ENCODE measurements at regions of chr14 and their contacts with region 1.

Region 1: GRCh38 chr14:23301288-23301968 is 1.2 kb downstream of the PPP1R3E start:
- DNase-seq: peak; percentile 99
- H3K4me3 Mint-ChIP-seq: peak overlapping the region; percentile 89
- H3K27ac Mint-ChIP-seq: peak overlapping the region; percentile 96
- H3K4me1 Mint-ChIP-seq: peaks cover 24% of the 10 kb centered on the region
- H3K27me3 Mint-ChIP-seq: peaks cover 2% of the 10 kb centered on the region

Region 2: DNA sequence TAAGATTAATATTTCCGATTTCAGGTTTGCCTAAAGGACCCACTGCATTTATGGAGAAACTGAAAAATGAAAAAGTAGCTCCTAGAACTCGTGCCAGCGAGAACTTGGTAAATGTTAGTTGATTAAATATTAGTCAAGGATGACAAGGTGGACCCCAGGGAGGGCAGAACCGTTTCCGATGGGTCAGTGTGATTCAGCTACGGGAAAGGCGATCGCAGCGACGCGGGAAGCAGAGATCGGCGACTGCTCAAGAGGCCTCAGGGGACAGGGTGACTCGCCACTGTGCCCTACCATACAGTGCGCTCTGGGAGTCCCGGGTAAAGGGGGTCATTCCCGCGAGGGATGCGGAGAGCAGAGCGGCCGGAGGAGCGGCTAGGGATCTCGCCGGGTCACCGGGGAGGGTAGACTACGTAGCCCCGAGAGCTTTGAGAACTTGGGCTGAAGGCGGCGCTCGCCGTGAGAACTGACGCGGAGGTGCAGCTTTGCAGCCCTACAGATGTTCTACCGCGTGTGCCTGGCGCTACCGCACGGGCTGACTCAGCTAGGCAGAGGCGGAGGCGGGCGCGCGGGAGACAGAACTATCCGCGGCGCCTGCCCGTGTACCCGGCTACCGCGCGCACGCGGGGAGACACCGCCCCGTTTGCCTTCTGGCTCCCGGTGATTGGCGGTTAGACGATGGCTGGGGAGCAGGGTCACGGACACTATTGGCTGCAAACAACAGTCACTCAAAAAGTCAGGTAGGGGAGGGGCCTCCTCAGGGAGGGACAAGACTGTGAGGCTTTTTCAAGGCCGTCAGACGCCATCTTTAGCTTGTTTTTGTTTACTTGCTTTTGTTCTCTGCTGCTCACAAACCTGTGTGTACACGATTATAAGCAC is 294.6 kb before region 1 on chr14:
- intact Hi-C with region 1: loop called (anchors 10 kb)
- DNase-seq: peak; percentile 98
- H3K4me3 Mint-ChIP-seq: peak overlapping the region; percentile 92
- H3K27ac Mint-ChIP-seq: peak overlapping the region; percentile 98
- H3K4me1 Mint-ChIP-seq: peaks cover 38% of the 10 kb centered on the region
- H3K27me3 Mint-ChIP-seq: no peaks in the 10 kb centered on the region

Region 3: DNA sequence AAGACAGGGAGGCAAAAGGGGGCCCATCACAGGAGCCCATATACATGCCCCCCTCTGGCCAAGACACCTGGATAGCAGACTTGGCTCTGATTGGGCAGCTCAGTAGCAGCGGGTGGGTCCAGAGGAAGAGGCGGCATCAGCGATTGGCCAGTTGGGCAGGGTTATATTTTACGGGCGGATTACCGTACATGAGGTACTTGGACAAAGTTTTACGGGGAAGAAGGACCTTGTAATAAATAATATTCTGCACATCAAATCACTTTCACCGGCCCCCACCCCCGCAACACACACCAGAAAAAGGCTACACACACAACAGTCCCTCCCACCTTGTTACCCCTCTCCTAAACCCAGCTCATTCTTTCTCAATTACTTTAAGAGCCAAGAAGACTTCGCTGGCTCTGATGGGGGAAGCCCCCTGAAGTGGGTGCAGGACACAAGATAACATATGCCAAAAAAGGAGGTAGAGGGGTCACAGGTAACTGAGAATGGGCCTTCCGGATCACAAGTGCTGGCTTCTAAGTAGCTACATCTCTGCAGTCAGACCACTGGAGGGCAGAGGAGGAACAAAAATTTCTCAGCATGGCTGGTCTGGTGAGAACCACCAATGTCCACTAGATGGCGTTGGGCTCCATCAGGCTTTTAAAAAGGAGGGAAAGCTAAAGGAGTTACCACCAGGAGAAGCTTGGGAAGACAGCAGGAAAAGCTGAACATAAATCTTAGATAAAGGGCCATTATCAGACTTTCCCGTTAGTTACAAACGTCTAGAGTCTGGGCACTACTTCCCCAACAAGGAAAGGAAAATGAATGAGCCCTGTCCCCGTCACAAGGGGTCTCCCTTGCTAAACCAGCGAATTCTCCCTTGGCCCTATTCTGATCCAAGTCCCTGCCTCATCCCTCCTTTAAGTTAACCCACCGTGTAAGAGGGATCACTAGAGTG is 232.7 kb before region 1 on chr14:
- intact Hi-C with region 1: no loop called
- DNase-seq: peak; percentile 70
- H3K4me3 Mint-ChIP-seq: peak overlapping the region; percentile 54
- H3K27ac Mint-ChIP-seq: peak overlapping the region; percentile 49
- H3K4me1 Mint-ChIP-seq: peaks cover 26% of the 10 kb centered on the region
- H3K27me3 Mint-ChIP-seq: no peaks in the 10 kb centered on the region

Region 4: GRCh38 chr14:23095196-23096108 is 206.0 kb before region 1 on chr14 and contains the start of gene C14orf119:
- intact Hi-C with region 1: loop called (anchors 2 kb)
- DNase-seq: peak; percentile 99
- H3K4me3 Mint-ChIP-seq: no peak within 1 kb of the TSS
- H3K27ac Mint-ChIP-seq: no peak within 1 kb of the TSS
- H3K4me1 Mint-ChIP-seq: peaks cover 33% of the 10 kb centered on the region
- H3K27me3 Mint-ChIP-seq: no peaks in the 10 kb centered on the region
- total RNA-seq, gene C14orf119: 57.7 and 65.2 TPM in 2 replicates

Region 5: GRCh38 chr14:23120541-23121251 is 180.7 kb before region 1 on chr14:
- intact Hi-C with region 1: loop called (anchors 1 kb)
- DNase-seq: peak; percentile 73
- H3K4me3 Mint-ChIP-seq: no peak overlapping the region
- H3K27ac Mint-ChIP-seq: peak overlapping the region; percentile 64
- H3K4me1 Mint-ChIP-seq: peaks cover 17% of the 10 kb centered on the region
- H3K27me3 Mint-ChIP-seq: no peaks in the 10 kb centered on the region

Region 6: DNA sequence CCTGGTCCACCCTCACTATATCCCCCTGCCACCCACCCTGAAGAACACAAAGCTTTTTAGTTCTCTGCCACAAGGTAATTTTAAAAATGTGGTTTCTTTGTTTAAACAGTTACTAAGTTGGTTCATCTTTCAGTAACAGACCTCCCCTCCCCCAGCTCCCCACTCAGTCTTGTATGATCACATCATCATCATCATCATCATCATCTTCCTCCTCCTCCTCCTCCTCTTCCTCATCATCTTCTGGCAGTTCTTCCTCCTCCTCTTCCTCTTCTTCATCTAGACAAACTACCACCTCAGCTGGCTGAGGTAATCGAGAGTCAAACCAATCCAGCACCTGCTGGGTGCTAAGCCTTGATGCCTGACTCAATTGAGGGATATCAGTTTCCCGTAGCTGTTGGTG is 26.0 kb before region 1 on chr14:
- intact Hi-C with region 1: no loop called
- DNase-seq: no peak
- H3K4me3 Mint-ChIP-seq: no peak overlapping the region
- H3K27ac Mint-ChIP-seq: no peak overlapping the region
- H3K4me1 Mint-ChIP-seq: no peaks in the 10 kb centered on the region
- H3K27me3 Mint-ChIP-seq: no peaks in the 10 kb centered on the region

Region 7: DNA sequence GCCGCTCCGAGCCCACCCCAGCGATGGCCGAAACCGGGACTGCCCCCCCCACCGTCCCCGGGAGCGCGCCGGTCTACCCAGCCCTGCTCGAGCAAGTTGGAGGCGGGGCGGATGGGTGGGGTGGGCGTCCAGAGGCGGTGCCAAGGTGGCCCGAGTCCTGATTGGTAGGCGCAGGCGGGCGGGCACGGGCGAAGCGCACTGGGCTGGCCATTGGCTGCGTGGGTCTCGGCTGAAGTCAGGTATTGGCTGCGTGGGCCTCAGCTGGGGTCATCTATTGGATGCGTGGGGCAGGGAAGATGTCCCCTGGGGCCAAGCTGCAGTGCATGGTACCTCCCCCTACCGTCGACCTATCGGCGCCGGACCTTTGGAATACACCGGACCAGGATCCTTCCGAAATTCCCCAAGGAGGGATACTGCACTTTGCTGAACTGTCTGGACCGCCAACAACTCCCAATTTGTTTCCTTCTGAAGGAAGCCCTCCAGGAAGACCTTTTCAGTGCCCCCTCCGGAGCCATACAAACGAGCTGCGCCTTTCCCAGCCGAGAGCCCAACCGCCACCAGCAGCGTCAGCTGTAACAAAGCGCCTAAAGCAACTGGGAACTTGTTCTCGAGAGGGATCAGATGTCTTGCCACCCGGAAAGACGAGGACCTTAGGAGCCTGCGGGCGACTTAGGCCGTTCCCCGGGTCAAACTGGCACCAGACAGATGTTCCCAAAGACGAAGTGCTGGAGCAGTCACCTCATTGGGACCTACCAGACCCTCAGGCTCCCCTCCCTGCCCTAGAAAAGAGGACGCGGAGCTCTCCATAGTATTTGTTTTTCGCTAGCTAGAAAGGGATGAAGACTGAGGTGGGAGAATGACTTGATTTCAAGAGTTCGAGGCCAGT is 15.2 kb before region 1 on chr14 and contains the start of gene HOMEZ:
- intact Hi-C with region 1: loop called (anchors 1 kb)
- DNase-seq: peak; percentile 97
- H3K4me3 Mint-ChIP-seq: peak within 1 kb of the TSS; percentile 95
- H3K27ac Mint-ChIP-seq: peak within 1 kb of the TSS; percentile 93
- H3K4me1 Mint-ChIP-seq: peaks cover 23% of the 10 kb centered on the region
- H3K27me3 Mint-ChIP-seq: no peaks in the 10 kb centered on the region
- total RNA-seq, gene HOMEZ: 13.3 and 13.7 TPM in 2 replicates

Region 8: DNA sequence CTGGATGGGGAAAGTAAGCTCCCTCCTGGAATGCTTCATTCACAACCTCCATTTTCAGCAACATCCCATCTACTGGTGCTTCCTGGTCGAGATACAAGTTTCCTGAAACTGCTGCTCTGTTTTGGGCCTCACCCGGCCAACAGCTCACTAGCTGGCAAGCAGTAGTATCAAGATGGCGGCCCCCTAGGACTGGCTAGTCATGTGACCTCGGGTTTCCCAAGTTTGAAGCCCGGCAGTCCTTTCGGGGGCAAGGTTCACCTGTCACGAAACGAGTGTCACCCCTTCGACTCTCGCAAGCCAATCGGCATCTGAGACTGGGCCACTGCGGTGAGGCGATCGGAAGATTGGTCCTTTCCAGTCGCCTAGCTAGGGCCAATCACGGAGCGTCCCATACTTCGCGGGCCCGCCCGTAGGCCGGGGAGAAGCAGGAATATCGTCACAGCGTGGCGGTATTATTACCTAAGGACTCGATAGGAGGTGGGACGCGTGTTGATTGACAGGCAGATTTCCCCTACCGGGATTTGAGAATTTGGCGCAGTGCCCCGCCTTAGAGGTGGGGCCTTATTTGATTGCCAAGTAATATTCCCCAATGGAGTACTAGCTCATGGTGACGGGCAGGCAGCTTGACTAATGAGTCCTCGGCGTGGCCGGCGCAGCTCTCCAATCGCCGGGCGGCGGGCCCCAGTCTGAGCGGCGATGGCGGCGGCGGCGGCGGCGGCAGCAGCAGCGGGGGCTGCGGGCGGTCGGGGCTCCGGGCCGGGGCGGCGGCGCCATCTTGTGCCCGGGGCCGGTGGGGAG is 19.5 kb after region 1 on chr14 and contains the start of gene PABPN1:
- intact Hi-C with region 1: loop called (anchors 1 kb)
- DNase-seq: peak; percentile 98
- H3K4me3 Mint-ChIP-seq: peak within 1 kb of the TSS; percentile 88
- H3K27ac Mint-ChIP-seq: peak within 1 kb of the TSS; percentile 86
- H3K4me1 Mint-ChIP-seq: peaks cover 23% of the 10 kb centered on the region
- H3K27me3 Mint-ChIP-seq: no peaks in the 10 kb centered on the region
- total RNA-seq, gene PABPN1: 241 and 259 TPM in 2 replicates

Region 9: DNA sequence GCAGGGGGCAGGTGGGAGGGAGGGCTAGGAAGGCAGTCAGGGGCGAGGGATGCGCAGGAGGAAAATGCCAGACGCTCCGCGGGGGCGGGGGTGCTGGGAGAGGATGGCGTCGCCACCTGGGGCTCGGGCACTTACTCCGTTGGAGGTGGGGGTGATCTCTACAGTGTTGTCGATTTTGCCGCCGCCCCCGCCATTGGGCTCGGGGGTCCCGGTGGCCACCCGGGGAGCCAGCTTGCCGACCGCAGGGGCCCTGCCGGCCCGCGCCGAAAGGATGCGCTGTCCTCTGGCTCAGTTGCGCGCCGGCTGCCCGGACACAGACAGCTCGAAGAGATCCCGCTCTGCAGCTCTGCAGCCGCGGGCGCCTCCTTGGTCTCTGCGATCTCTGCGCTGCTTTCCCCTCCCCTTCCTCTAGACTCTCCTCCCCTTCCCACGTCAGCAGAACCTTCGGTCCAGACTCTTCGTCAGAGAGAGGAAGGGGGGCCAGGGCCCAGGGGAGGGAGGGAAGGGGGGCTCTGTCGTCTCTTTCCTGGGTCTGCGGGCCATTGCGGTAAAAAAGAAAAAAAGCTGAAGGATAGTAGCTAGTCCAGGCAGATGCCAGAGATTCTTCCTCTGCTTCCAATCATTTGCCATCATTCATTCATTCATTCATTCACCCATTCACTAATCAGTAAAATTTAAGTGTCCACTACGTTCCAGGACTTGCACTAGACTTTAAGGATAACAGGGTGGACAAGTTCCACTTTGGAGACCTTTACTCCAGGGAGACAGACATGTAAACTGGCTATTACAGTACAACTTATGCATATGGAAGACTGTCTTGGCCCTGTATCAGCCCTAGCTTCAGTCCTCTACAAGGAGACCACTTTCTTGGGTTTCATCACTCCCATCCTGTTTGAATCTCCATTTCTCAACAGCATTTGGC is 51.3 kb after region 1 on chr14 and contains the start of gene SLC22A17:
- intact Hi-C with region 1: no loop called
- DNase-seq: peak; percentile 24
- H3K4me3 Mint-ChIP-seq: peak within 1 kb of the TSS; percentile 72
- H3K27ac Mint-ChIP-seq: no peak within 1 kb of the TSS
- H3K4me1 Mint-ChIP-seq: peaks cover 3% of the 10 kb centered on the region
- H3K27me3 Mint-ChIP-seq: peaks cover 45% of the 10 kb centered on the region
- total RNA-seq, gene SLC22A17: 2.9 and 3.2 TPM in 2 replicates

Region 10: GRCh38 chr14:23365016-23365602 is 63.7 kb after region 1 on chr14 and contains the start of gene EFS:
- intact Hi-C with region 1: no loop called
- DNase-seq: no peak
- H3K4me3 Mint-ChIP-seq: no peak within 1 kb of the TSS
- H3K27ac Mint-ChIP-seq: no peak within 1 kb of the TSS
- H3K4me1 Mint-ChIP-seq: no peaks in the 10 kb centered on the region
- H3K27me3 Mint-ChIP-seq: peaks cover 43% of the 10 kb centered on the region
- total RNA-seq, gene EFS: not detected in 2 replicates

Measured in activated T-helper 2 cell treated with anti-CD3 and anti-CD28 coated beads, Interferon-gamma antibody, Interleukin-2, Interleukin-4, amounts not matched to agents 10 μg/mL and 5 μg/mL and 100 μg/mL, durations not matched to agents 14 hours and 24 hours and 36 hours (primary cell).